Endothelial cell of umbilical vein (primary cell): ENCODE measurements at regions of chr3 and their contacts with region 1.

Region 1: DNA sequence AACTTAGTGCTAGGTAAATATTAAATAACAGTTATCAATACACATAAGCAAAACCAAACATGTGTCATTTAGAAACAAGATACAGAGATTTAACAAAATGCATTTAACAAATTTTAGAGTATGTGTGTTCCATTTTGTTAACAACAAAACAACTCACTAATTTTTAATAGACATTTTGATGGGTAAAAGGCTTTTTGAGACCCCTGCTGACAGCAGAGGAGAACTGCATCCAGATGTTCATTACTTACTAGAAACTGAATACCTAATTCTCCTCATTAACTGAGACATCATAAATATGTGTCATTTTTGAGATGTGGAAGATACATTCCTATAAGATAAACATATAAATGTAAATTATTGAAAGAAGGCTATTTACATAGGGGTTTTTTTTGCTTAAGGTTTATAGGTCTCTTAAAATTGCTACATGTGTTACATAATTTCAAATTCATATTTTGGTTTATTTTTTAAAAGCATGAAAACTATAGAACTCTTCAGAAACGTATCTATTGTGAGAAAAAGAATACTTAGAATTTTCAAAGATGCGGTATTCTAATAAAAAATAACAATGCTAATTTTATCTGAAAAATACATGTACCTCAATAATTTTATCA is 1009.8 kb downstream of the TUSC7 start:
- DNase-seq: peak; percentile 45
- H3K4me3 ChIP-seq: no peak overlapping the region
- H3K27ac ChIP-seq: no peak overlapping the region
- H3K4me1 ChIP-seq: no peaks in the 10 kb centered on the region
- H3K27me3 ChIP-seq: peaks cover 0 to 3% of the 10 kb centered on the region in 2 experiments
- CTCF ChIP-seq: peak; percentile 52 to 63
- POLR2A ChIP-seq: no peak

Region 2: DNA sequence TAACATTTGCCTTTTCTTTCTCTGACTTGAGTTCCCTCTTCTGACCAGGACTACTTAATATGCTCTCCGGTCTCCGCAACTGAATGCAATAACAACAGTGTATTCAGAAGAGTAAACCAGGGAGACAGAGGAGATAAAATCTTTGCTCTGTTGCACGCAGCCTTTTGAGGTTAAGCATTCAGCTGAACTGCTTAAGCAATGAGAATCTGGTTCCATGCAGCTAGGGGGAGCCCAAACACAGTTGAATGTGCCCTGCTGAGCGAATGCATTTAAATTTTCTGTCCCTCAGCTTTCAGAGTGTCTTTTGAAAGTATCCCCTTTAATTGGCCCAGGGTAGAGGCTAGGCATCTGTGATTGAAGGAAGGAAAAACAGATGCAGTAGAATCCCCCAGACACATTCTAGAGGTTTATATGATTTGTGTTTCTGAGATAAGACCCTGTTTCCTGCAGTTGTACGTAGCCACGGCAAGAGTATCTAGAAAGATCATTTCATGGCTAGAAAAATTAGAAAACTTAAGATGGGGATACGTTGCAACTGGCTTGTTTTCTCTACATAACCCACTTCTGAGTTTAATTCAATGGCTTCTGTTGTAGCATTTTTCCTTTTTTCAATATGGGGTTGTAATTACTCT is 700.2 kb before region 1 on chr3:
- CTCF ChIA-PET with region 1: interaction called, 4 read pairs
- POLR2A ChIA-PET with region 1: no interaction called
- dilution Hi-C with region 1: no loop called
- intact Hi-C with region 1: loop called (anchors 1 kb)
- DNase-seq: peak; percentile 67
- H3K4me3 ChIP-seq: no peak overlapping the region
- H3K27ac ChIP-seq: no peak overlapping the region
- H3K4me1 ChIP-seq: no peaks in the 10 kb centered on the region
- H3K27me3 ChIP-seq: peaks cover 4 to 9% of the 10 kb centered on the region in 2 experiments
- CTCF ChIP-seq: peak; percentile 73 to 78
- POLR2A ChIP-seq: no peak

Region 3: DNA sequence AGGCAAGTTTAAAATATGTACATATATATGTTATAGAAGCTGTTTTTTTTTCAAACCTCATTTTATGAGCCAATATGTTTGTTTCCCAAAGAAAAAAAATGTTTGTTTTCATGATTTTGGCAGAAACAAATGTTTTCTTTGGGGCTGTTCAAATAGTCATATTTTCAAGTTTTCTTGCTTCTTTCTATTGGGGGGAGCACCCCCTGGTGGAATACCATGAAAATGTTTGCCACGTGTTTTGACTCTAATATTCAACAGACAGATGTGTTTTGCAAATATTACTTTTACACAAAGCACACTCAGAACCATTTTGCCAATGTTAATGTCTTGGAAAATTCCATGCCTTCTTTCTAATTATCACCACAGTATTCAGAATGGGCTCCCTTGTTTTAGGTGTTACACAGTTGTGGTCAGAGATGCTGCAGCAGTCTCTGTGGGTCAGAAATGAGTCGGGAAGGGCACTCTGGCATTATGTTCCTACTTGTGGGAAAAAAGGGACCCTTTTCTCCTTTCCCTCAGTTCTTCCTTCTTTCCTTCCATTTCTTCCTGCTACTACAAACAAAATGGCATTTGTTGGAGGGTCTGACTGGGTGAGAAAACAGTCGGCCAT is 192.8 kb before region 1 on chr3:
- CTCF ChIA-PET with region 1: interaction called, 7 read pairs
- POLR2A ChIA-PET with region 1: no interaction called
- dilution Hi-C with region 1: no loop called
- intact Hi-C with region 1: loop called (anchors 1 kb)
- DNase-seq: peak; percentile 40
- H3K4me3 ChIP-seq: no peak overlapping the region
- H3K27ac ChIP-seq: no peak overlapping the region
- H3K4me1 ChIP-seq: no peaks in the 10 kb centered on the region
- H3K27me3 ChIP-seq: peaks cover 0 to 3% of the 10 kb centered on the region in 2 experiments
- CTCF ChIP-seq: peak; percentile 42 to 53
- POLR2A ChIP-seq: no peak

Region 4: DNA sequence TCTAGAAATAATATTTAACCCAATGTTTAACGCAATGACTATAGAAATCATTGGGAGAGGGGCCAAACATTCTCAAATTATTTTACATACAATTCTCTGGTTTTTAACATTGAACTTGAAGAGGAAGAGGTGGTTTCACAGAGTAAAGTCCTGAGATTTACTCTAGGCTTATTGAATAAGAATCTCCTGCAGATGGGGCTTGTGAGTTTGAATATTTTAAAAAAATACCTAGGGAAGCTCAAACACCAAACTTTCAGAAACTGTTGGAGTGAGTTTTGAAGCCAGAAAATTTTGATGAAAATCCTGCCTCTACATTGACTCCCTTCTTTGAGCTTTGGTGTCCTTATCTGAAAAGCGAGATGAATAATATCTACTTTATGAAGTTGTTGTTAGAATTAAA is 103.2 kb before region 1 on chr3:
- CTCF ChIA-PET with region 1: interaction called, 12 read pairs
- POLR2A ChIA-PET with region 1: no interaction called
- dilution Hi-C with region 1: no loop called
- intact Hi-C with region 1: no loop called
- DNase-seq: no peak
- H3K4me3 ChIP-seq: no peak overlapping the region
- H3K27ac ChIP-seq: no peak overlapping the region
- H3K4me1 ChIP-seq: peaks cover 2% of the 10 kb centered on the region
- H3K27me3 ChIP-seq: no peaks in the 10 kb centered on the region
- CTCF ChIP-seq: no peak
- POLR2A ChIP-seq: no peak

Region 5: GRCh38 chr3:117836296-117836695 is 116.9 kb after region 1 on chr3:
- CTCF ChIA-PET with region 1: no interaction called
- POLR2A ChIA-PET with region 1: no interaction called
- dilution Hi-C with region 1: no loop called
- intact Hi-C with region 1: no loop called
- DNase-seq: no peak
- H3K4me3 ChIP-seq: no peak overlapping the region
- H3K27ac ChIP-seq: no peak overlapping the region
- H3K4me1 ChIP-seq: no peaks in the 10 kb centered on the region
- H3K27me3 ChIP-seq: no peaks in the 10 kb centered on the region
- CTCF ChIP-seq: no peak
- POLR2A ChIP-seq: no peak

Region 6: DNA sequence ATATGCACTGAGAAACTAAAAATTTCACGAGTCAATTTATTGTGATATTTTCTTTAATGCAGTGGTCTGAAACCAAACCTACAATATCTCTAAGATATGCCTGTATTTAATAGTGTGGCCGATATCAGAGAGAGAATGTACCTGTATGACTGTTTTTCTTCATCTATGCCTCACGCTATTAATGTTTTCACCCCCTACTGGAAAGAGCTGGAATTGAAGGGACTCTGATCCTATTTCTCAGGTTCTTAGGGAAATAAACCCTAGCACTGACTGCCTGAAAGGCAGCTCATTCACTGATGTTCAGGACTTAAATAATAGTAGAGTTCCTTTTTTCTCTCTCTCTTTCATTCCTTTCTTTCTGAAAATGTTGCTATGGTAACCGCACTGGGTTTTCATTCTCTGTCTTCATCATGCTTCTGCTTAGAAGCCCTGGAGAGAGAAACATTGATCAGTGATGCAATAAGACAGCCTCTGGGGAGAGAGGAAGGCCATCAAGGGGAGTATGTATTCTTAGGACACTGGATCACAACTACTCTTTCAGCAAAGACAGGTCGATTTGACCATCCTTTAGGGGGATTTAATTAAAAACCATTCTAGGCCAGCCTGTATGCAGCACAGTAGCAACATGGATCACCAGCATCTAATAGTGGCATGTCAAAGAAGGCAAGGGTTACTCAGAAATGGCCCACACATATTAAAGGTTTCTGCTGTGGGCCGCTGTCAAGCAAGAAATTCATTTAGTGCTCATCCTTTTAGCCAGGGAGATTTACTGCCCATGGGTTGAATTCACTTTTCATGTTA is 179.5 kb after region 1 on chr3:
- CTCF ChIA-PET with region 1: no interaction called
- POLR2A ChIA-PET with region 1: no interaction called
- dilution Hi-C with region 1: no loop called
- intact Hi-C with region 1: loop called (anchors 10 kb)
- DNase-seq: peak; percentile 44
- H3K4me3 ChIP-seq: no peak overlapping the region
- H3K27ac ChIP-seq: no peak overlapping the region
- H3K4me1 ChIP-seq: no peaks in the 10 kb centered on the region
- H3K27me3 ChIP-seq: no peaks in the 10 kb centered on the region
- CTCF ChIP-seq: peak; percentile 40 to 56
- POLR2A ChIP-seq: no peak